BJ (cell line): ENCODE measurements at regions of chr6 and their contacts with region 1.

Region 1: GRCh38 chr6:10030942-10031537 is 383.8 kb downstream of the TFAP2A start:
- DNase-seq: no peak
- H3K4me3 ChIP-seq: no peak overlapping the region
- H3K27me3 ChIP-seq: no peaks in the 10 kb centered on the region
- CTCF ChIP-seq: peak; percentile 51

Region 2: DNA sequence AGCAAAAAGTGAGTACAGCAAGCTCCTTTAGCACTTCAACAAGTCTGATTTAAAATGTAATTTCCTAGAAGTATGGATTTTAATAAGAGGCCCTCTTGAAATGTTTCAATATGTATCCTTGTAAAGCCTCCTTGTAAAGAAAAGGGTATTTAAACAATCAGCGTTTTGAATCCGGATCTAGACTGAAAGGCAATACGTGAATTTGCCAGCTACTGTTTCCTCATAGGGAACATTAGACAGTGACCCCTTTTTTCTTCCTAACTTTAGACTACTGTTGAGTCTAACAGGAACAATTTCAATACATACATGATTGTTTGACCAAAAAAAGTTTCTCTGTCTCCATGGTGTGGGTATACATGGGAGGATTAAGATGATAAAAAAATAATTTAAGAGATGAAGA is 11.2 kb before region 1 on chr6:
- CTCF ChIA-PET with region 1: interaction called, 12 read pairs
- POLR2A ChIA-PET with region 1: no interaction called
- DNase-seq: no peak
- H3K4me3 ChIP-seq: no peak overlapping the region
- H3K27me3 ChIP-seq: no peaks in the 10 kb centered on the region
- CTCF ChIP-seq: no peak

Region 3: DNA sequence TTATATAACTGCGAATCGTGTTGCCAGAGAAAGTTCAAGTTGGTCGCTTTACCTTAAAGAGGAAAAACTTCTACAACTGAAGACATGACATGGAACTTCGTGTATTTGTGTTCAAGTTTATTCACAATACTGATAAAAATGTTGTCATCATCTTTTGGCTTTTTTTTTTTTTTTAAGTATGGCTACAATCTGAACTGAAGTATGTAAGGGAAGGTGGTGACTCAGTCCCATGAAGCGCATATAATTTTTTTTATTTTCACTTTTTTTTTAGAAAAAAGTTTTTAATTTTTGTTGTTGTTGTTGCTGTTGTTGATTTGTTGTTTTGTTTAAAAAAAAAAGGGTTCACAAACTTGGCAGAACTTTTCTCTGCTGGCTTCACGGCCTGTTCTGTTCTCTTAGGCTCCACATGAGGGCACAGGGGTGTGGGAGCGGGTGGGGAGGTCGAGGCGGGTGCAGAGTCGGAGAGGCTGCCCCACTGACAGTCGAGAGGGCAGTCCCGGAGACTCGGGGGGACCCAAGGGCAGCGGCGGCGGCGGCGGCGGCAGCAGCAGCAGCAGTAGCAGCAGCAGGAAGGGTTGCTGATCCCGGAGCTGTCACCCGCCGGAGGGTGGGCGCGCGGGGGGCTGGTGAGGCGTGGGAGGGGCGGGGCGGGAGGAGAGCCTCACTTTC is 366.9 kb after region 1 on chr6:
- CTCF ChIA-PET with region 1: interaction called, 12 read pairs
- POLR2A ChIA-PET with region 1: no interaction called
- DNase-seq: no peak
- H3K4me3 ChIP-seq: 0 out of 2 replicates have a peak overlapping the region, but pooled peaks have one; percentile 7
- H3K27me3 ChIP-seq: no peaks in the 10 kb centered on the region
- CTCF ChIP-seq: no peak

Region 4: DNA sequence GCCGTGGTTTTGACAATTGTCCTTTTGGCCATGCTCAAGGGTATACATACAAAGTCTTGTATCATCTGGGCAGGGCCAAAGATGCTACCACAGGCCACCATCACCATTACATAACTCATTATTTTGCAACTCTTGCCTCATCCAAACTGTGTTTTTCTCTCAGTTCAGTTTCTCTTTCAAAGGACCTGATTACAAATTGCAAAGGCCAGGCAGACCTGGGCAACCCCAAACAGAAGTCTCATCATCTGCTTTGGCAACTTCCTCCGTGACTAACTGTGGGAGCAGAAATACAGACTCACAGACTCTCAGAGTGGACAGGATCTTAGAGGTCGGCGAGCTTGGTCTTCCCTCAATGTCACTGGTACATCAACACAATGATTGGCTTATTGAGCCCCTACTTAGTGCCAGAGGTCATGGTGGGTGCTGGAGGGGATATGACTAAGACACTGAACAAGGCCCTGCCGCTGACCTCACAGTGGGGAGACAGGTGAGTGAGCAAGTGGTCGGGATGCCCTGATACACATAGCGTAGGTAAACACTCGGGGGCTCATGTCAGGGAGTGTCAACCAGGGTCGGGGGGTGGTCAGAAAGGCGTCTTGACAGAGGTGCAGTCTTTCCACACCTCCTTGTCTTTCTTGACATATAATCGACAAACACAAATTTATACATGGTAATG is 1319.4 kb after region 1 on chr6:
- CTCF ChIA-PET with region 1: no interaction called
- POLR2A ChIA-PET with region 1: no interaction called
- DNase-seq: no peak
- H3K4me3 ChIP-seq: no peak overlapping the region
- H3K27me3 ChIP-seq: no peaks in the 10 kb centered on the region
- CTCF ChIP-seq: no peak